Breast epithelium (tissue), 4 donors: ENCODE measurements at regions of chr2 and their contacts with region 1.

Region 1: GRCh38 chr2:96174251-96175144 is 29.3 kb upstream of the DUSP2 start:
- DNase-seq: peak; percentile 64 to 76
- H3K4me3 ChIP-seq: no peak overlapping the region
- H3K27ac ChIP-seq: no peak overlapping the region
- H3K4me1 ChIP-seq: no peaks in the 10 kb centered on the region
- H3K27me3 ChIP-seq: no peaks in the 10 kb centered on the region
- CTCF ChIP-seq: peak; percentile 64 to 93 (median 77)
- POLR2A ChIP-seq: no peak

Region 2: DNA sequence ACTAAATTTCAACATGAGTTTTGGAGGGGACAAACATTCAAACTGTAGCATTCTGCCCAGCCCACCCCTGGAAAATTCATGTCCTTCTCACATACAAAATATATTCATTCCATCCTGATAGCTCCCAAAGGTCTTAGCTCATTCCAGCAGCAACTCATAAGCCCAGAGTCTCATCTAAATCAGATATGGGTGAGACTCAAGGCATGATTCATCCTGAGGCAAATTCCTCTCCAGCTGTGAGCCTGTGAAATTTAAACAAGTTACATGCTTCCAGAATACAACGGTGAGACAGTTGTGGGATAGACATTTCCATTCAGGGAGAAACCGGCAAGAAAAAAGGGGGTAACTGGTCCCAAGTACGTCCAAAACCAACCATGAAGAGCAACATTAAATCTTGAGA is 815.5 kb before region 1 on chr2:
- intact Hi-C with region 1: no loop called
- DNase-seq: no peak
- H3K4me3 ChIP-seq: no peak overlapping the region
- H3K27ac ChIP-seq: no peak overlapping the region
- H3K4me1 ChIP-seq: no peaks in the 10 kb centered on the region
- H3K27me3 ChIP-seq: no peaks in the 10 kb centered on the region
- CTCF ChIP-seq: no peak
- POLR2A ChIP-seq: no peak

Region 3: DNA sequence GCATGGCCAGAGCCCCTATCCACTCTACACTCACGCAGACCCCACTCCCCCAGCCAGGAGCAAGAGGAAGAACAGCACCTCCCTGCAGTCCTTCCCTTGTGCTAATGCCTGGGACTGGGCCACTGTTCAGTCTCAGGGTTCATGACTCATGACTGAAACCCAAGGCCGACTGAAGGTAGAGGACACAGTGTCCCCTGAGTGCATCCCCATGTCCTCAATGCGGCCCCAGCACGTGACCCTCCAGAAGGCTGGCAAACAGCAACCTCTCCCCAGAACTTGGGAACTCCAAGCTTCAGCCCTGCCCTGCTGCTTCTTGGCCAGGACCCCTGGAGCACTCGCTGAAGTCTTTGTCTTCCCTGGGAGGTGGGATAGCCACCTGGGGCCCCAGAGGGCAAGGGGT is 52.1 kb before region 1 on chr2:
- intact Hi-C with region 1: no loop called
- DNase-seq: no peak
- H3K4me3 ChIP-seq: no peak overlapping the region
- H3K27ac ChIP-seq: no peak overlapping the region
- H3K4me1 ChIP-seq: peaks cover under 1 to 9% of the 10 kb centered on the region in 2 donors
- H3K27me3 ChIP-seq: no peaks in the 10 kb centered on the region
- CTCF ChIP-seq: no peak
- POLR2A ChIP-seq: no peak

Region 4: DNA sequence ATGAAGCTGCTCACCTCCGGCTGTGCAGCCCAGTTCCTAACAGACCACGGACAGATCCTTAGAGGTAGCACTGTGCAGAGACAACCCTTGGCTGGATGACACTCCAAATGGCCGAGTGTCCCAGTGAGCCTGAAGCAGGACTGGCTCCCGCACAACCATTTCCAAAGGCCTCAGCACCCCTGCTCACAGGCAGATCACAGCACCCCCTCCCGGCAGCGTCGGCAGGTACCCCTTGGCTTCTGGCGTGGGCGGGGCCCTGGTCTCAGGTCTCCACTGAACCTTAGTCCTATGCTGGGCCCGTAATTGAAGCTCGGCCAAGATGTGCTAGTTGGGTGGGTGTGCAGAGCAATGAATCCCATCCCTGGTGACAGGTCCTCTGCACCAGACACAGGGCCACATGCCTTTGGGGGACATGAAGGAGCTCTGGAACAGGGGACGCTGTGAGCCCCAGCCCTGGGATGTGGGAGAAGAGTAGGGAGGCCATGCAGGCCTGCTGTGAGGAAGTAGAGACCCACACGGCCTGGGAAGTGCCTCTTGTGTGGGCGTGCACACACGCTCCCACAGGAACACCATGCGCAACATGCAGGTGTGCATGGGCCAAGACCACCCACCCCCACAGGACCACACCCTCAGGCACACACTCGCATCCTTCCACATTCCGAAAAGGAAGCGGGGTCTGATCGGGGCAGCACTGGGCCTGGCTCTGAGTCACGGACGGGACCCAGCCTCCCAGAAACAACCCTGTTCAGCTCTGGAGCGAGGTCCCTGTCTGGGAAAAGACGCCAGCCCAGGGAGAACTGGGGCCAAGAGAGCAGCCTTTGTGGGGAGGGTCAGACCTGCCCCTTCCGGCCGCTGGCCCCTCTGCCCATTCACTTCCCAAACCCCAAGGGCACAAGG is 32.0 kb before region 1 on chr2:
- intact Hi-C with region 1: loop called (anchors 1 kb)
- DNase-seq: no peak
- H3K4me3 ChIP-seq: no peak overlapping the region
- H3K27ac ChIP-seq: no peak overlapping the region
- H3K4me1 ChIP-seq: peaks cover 11 to 19% of the 10 kb centered on the region in 2 donors
- H3K27me3 ChIP-seq: no peaks in the 10 kb centered on the region
- CTCF ChIP-seq: no peak
- POLR2A ChIP-seq: no peak